ENCODE measurements at regions of chr3 and their contacts with region 1.

Region 1: DNA sequence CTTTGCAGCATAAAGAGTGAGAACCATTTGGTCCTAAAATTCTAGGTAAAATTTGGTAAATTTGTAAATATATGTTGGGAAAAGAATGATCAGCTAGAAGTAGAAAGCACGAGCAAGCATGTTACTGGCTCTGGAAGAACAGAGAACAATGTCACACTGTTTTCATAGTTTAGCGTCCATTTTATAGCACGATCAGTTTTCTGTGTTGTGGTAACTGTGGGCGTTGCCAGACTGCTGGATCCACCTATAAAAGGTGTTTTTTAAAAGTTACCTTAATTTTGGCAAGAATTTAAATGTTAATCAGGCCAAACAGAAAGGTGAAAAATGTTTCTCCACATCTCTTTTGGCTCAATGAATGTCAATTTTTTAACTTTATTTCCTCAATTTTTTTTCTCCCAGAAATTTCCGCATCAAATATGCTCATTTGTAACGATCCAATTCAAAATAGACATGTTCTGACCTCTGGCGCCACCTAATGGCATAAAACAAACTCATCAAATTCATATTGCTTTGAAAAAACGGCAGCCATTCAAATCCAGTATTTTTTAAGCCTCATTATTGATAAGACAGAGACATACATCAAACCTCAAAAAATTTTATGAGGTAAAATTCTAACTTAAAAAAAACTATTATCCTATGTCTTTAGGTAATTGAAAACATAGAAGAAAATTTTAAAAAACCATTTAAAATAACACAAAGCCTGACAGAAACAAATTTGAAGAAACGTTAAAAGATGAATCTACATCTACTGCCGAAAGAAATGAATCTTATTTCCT is 5.5 kb upstream of the GP5 start:
- DNase-seq: no peak
- ATAC-seq: no peak
- H3K4me3 ChIP-seq: no peak overlapping the region
- H3K27ac ChIP-seq: no peak overlapping the region
- H3K4me1 ChIP-seq: no peaks in the 10 kb centered on the region
- H3K27me3 ChIP-seq: no peaks in the 10 kb centered on the region

Region 2: GRCh38 chr3:194023501-194024280 is 380.9 kb before region 1 on chr3:
- intact Hi-C with region 1: no loop called
- DNase-seq: no peak
- ATAC-seq: no peak
- H3K4me3 ChIP-seq: no peak overlapping the region
- H3K27ac ChIP-seq: no peak overlapping the region
- H3K4me1 ChIP-seq: no peaks in the 10 kb centered on the region
- H3K27me3 ChIP-seq: no peaks in the 10 kb centered on the region

Region 3: DNA sequence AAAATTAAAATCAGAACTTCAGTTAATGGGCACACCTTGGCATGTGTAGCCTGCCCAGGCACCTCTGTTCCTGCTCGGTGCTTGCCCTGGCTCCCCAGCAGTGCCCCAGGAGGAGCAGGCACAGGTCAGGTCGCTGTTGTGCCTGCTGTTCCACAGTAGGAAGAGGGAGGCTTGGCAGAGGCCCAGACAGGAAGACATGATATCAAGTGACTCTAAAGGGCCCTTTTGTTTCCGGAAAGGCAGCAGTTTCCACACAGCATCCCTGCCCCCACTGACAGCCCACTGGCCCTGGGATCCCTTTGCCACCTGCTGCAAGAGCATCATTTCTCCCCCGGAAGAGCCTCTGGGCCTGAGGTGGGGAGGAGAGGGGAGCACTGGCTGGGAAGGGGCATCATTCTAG is 309.1 kb before region 1 on chr3:
- intact Hi-C with region 1: no loop called
- DNase-seq: peak in 1 of 2 donors; percentile 78
- ATAC-seq: no peak
- H3K4me3 ChIP-seq: no peak overlapping the region
- H3K27ac ChIP-seq: no peak overlapping the region
- H3K4me1 ChIP-seq: peaks cover 0 to 4% of the 10 kb centered on the region in 2 donors
- H3K27me3 ChIP-seq: no peaks in the 10 kb centered on the region

Region 4: GRCh38 chr3:194231929-194232842 is 172.4 kb before region 1 on chr3:
- intact Hi-C with region 1: no loop called
- DNase-seq: no peak
- ATAC-seq: no peak
- H3K4me3 ChIP-seq: no peak overlapping the region
- H3K27ac ChIP-seq: no peak overlapping the region
- H3K4me1 ChIP-seq: no peaks in the 10 kb centered on the region
- H3K27me3 ChIP-seq: no peaks in the 10 kb centered on the region

Region 5: GRCh38 chr3:194333212-194333980 is 71.2 kb before region 1 on chr3:
- intact Hi-C with region 1: loop called in 1 of 2 experiments (anchors 2 kb)
- DNase-seq: peak; percentile 91 to 97
- ATAC-seq: peak; percentile 95
- H3K4me3 ChIP-seq: no peak overlapping the region
- H3K27ac ChIP-seq: no peak overlapping the region
- H3K4me1 ChIP-seq: no peaks in the 10 kb centered on the region
- H3K27me3 ChIP-seq: no peaks in the 10 kb centered on the region

Region 6: DNA sequence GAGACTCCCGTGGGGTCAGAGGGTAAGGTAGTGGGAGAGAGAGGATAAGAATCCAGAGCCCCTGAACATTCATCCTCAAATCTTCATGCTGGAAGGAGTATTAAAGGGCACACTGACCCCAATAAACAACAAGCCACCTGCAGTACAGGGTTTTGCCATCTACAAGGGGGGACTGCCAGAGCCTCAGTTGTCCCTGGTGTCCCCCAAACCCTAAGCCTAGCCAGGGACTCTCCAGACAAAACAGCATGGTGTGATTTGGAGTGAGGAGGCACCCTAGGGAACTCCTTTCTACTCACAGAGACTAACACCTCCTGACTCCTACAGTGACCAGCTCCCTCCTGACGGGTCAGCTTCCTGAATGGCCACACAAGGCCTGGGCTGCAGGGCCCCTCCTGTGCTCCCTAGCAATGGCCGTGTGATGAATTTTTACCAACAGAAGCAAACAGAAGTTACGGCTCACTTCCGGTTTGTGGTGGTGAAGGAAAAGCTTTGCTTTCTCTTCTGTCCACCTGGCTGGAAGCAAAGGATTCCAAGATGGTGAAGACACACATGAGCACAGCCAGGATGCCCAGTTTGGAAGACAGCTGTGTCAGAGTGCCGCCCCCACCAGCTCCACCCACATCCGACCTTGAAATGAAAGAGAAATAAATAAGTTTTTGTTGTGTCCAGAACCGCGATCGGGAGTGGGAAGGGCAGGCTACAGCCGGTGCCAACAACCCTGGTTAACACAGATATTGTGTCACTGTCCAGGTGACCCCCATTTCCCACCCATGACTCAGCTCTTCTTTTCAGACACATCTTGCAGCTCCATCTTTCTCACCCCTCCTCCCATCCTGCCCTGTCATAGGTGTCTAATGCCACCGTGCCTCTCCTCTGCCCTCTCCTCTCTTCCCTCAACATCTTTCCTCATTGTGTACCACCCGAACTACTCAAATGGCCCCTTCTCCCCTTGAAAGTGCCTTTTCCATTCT is 151.8 kb after region 1 on chr3:
- intact Hi-C with region 1: no loop called
- DNase-seq: no peak
- ATAC-seq: no peak
- H3K4me3 ChIP-seq: no peak overlapping the region
- H3K27ac ChIP-seq: no peak overlapping the region
- H3K4me1 ChIP-seq: peaks cover 0 to 2% of the 10 kb centered on the region in 2 donors
- H3K27me3 ChIP-seq: no peaks in the 10 kb centered on the region